ENCODE measurements at regions of chr1 and their contacts with region 1.

Region 1: GRCh38 chr1:30929135-30929889 is 20.8 kb upstream of the SDC3 start:
- H3K4me3 ChIP-seq: no peak overlapping the region
- H3K27ac ChIP-seq: no peak overlapping the region
- H3K4me1 ChIP-seq: no peaks in the 10 kb centered on the region
- CTCF ChIP-seq: peak; percentile 79; the same call in 1 of the 2 replicates

Region 2: DNA sequence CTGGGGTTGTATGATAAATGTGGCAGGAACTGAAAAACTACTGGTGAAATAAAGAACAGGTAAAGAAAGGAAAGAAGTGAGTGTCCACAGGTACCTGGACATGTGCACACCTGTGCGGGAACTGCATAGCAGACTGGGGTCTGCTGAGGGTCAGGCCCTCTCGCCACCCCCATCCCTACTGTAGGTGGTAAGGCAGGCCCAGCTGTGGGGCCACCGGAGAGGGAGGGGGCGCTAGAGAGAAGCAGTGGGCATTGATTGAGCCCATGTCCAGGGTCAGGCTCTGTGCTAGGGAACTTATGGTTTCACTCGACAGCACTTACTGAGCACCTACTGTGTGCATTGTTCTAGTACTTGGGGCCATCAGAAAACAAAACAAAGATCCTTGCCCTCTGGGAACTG is 606.5 kb before region 1 on chr1:
- CTCF ChIA-PET with region 1: no interaction called
- POLR2A ChIA-PET with region 1: no interaction called
- H3K4me3 ChIP-seq: no peak overlapping the region
- H3K27ac ChIP-seq: no peak overlapping the region
- H3K4me1 ChIP-seq: no peaks in the 10 kb centered on the region
- CTCF ChIP-seq: no peak

Region 3: GRCh38 chr1:30868833-30869435 is 60.4 kb before region 1 on chr1:
- CTCF ChIA-PET with region 1: no interaction called
- POLR2A ChIA-PET with region 1: no interaction called
- H3K4me3 ChIP-seq: no peak overlapping the region
- H3K27ac ChIP-seq: no peak overlapping the region
- H3K4me1 ChIP-seq: no peaks in the 10 kb centered on the region
- CTCF ChIP-seq: no peak

Region 4: GRCh38 chr1:30919025-30919881 is 10.1 kb before region 1 on chr1:
- CTCF ChIA-PET with region 1: interaction called, 16 read pairs
- POLR2A ChIA-PET with region 1: no interaction called
- H3K4me3 ChIP-seq: no peak overlapping the region
- H3K27ac ChIP-seq: no peak overlapping the region
- H3K4me1 ChIP-seq: peaks cover 3% of the 10 kb centered on the region; the same call in 1 of the 2 replicates
- CTCF ChIP-seq: no peak

Measured in HEK293 (cell line).